ENCODE measurements at regions of chr20 and their contacts with region 1.

Region 1: DNA sequence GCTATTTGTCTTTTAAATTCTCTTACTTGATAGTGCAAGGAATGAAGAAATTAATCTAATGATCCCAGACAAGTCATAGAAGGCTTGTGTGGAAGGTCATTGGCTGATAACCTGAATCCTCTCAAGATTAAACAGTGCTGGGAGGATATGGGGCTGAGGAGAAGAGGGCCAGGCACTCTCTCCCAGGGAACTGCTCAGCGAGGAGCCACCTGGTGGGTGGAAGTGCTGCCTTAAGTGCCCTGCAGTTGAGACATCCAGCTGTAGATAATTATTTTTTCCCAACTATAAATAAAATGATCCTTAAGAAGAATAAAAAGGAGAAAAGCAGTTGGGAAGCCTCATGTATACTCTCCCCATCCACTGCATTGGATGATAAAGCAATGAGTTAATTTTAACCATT is 47.9 kb downstream of the BTBD3 start:
- DNase-seq: no peak
- ATAC-seq: no peak
- H3K4me3 ChIP-seq: no peak overlapping the region
- H3K27ac ChIP-seq: no peak overlapping the region
- H3K4me1 ChIP-seq: no peaks in the 10 kb centered on the region
- H3K27me3 ChIP-seq: no peaks in the 10 kb centered on the region
- CTCF ChIP-seq: no peak
- POLR2A ChIP-seq: no peak
- RAD21 ChIP-seq: no peak

Region 2: GRCh38 chr20:11591965-11592364 is 373.6 kb before region 1 on chr20:
- CTCF ChIA-PET with region 1: no interaction called
- POLR2A ChIA-PET with region 1: no interaction called
- RAD21 ChIA-PET with region 1: no interaction called
- intact Hi-C with region 1: loop called (anchors 10 kb)
- DNase-seq: no peak
- ATAC-seq: no peak
- H3K4me3 ChIP-seq: no peak overlapping the region
- H3K27ac ChIP-seq: no peak overlapping the region
- H3K4me1 ChIP-seq: no peaks in the 10 kb centered on the region
- H3K27me3 ChIP-seq: no peaks in the 10 kb centered on the region
- CTCF ChIP-seq: no peak
- POLR2A ChIP-seq: no peak
- RAD21 ChIP-seq: no peak

Region 3: DNA sequence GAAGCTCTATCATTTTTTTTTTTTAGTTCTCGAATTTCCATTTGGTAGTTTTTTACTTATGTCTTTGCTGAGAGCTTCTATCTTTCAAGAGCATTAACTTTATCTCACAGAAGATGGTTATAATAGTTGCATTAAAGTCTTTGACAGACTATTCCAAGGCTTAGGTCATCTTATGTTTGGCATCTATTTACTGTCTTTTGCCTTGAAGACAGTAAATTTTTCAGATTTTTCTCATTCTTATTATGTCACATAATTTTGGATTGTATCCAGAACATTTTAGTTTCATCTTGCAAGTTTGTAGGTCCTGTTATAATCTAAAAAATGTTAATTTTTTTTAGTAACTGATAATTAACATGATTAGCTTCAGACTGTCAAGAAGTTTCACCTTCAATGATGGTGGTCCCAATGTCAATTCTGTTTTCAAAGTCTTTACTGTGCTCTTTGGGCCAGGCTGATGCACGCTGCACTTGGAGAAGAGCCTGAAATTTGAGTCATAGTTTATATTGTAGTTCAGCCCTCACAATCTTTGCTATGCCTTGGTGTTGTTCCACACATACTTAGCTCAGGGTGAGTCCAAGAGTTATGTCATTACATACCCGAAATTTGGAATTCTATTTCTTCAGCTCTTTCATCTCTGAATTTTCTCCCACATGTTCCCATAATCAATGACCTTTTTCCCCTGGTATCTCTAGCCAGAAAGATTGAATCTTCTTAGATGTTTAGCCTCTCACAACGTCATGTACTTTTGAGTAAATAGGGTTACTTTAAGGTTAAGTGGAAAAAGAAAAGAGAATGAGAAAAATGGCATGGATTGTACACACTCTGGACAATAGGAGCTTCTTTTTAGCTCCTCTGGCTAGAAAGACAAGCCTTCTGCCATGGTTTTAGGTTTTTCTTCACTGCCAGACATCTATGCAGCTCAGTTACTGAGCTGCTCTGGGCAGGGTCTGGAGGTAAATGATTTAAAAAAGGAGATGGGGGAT is 158.2 kb before region 1 on chr20:
- CTCF ChIA-PET with region 1: no interaction called
- POLR2A ChIA-PET with region 1: no interaction called
- RAD21 ChIA-PET with region 1: no interaction called
- intact Hi-C with region 1: no loop called
- DNase-seq: no peak
- ATAC-seq: no peak
- H3K4me3 ChIP-seq: no peak overlapping the region
- H3K27ac ChIP-seq: no peak overlapping the region
- H3K4me1 ChIP-seq: no peaks in the 10 kb centered on the region
- H3K27me3 ChIP-seq: peaks cover 3% of the 10 kb centered on the region
- CTCF ChIP-seq: no peak
- POLR2A ChIP-seq: no peak
- RAD21 ChIP-seq: no peak